Motor neuron (in vitro differentiated cells): ENCODE measurements at regions of chr10 and their contacts with region 1.

Region 1: GRCh38 chr10:93816123-93816747 is 58.5 kb downstream of the LGI1 start:
- ATAC-seq: peak; percentile 81 to 95 (median 91)
- H3K4me3 ChIP-seq: no peak overlapping the region
- H3K27ac ChIP-seq: no peak overlapping the region
- H3K4me1 ChIP-seq: peaks cover 8 to 11% of the 10 kb centered on the region in 2 donors

Region 2: DNA sequence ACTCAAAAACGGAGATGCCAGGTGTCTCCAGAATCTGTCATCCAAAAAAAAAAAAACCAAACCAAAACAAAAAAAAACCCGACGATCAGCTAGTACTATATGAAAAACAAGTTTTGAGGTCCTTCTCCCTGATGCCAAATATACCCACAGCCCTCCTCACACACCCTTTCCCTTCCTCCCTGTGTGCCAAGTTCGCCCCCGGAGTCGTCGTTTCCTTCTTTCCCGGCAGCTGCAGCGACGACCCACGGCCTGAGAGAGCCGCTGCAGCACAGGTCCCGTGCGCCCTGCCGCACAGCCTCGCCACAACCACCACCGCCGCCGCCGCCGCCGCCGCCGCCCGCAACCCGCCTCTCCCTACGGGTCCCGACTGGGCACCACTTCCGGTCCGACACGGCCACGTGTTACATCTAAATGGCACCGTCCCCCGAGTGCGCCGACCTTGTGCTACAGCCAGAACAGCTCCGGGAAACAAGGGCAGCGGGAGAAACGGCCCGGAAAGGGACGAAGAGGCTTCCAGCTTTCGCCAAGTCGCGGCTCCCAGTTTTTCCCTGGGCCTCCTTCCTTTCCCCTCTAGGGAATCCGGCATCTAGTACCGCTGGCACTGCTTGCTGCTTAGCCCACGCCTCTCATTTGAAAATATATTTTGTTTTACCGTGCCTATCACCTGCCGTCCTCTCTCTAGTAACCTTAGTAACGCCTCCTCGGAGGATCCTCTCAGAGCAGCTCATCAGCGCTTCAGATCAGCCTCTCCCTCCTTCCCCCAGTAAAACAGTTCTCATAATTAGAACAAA is 113.8 kb before region 1 on chr10 and contains the start of gene FRA10AC1:
- in situ Hi-C with region 1: loop called in 2 of 9 experiments (anchors 25 kb)
- ATAC-seq: peak; percentile 92 to 99 (median 99)
- H3K4me3 ChIP-seq: peak within 1 kb of the TSS; percentile 50 to 67 (median 62)
- H3K27ac ChIP-seq: peak within 1 kb of the TSS; percentile 89 to 93
- H3K4me1 ChIP-seq: peaks cover 19 to 23% of the 10 kb centered on the region in 2 donors
- total RNA-seq, gene FRA10AC1: 9.7 to 27.8 (median 19.3) TPM

Region 3: GRCh38 chr10:93746844-93747284 is 69.4 kb before region 1 on chr10:
- in situ Hi-C with region 1: loop called in 1 of 9 experiments (anchors 10 kb)
- ATAC-seq: peak in 4 of 8 experiments; percentile 47 to 88 (median 74)
- H3K4me3 ChIP-seq: no peak overlapping the region
- H3K27ac ChIP-seq: no peak overlapping the region
- H3K4me1 ChIP-seq: no peaks in the 10 kb centered on the region

Region 4: GRCh38 chr10:94066411-94066810 is 250.2 kb after region 1 on chr10:
- in situ Hi-C with region 1: no loop called
- ATAC-seq: peak in 3 of 8 experiments; percentile 27 to 66 (median 40)
- H3K4me3 ChIP-seq: no peak overlapping the region
- H3K27ac ChIP-seq: no peak overlapping the region
- H3K4me1 ChIP-seq: no peaks in the 10 kb centered on the region